ENCODE measurements at regions of chr1 and their contacts with region 1.

Region 1: GRCh38 chr1:63316984-63317816 is 5.2 kb upstream of the FOXD3 start:
- DNase-seq: peak; percentile 96
- ATAC-seq: peak; percentile 74
- H3K4me3 Mint-ChIP-seq: peak overlapping the region; percentile 94
- H3K27ac Mint-ChIP-seq: peak overlapping the region; percentile 84
- H3K4me1 Mint-ChIP-seq: peaks cover 48% of the 10 kb centered on the region
- H3K27me3 Mint-ChIP-seq: peaks cover 27% of the 10 kb centered on the region
- CTCF ChIP-seq: peak; percentile 56

Region 2: GRCh38 chr1:63294803-63295594 is 22.2 kb before region 1 on chr1:
- CTCF ChIA-PET with region 1: interaction called, 16 read pairs
- POLR2A ChIA-PET with region 1: no interaction called
- DNase-seq: no peak
- ATAC-seq: peak; percentile 87
- H3K4me3 Mint-ChIP-seq: peak overlapping the region; percentile 34
- H3K27ac Mint-ChIP-seq: peak overlapping the region; percentile 95
- H3K4me1 Mint-ChIP-seq: peaks cover 37% of the 10 kb centered on the region
- H3K27me3 Mint-ChIP-seq: no peaks in the 10 kb centered on the region
- CTCF ChIP-seq: no peak

Region 3: DNA sequence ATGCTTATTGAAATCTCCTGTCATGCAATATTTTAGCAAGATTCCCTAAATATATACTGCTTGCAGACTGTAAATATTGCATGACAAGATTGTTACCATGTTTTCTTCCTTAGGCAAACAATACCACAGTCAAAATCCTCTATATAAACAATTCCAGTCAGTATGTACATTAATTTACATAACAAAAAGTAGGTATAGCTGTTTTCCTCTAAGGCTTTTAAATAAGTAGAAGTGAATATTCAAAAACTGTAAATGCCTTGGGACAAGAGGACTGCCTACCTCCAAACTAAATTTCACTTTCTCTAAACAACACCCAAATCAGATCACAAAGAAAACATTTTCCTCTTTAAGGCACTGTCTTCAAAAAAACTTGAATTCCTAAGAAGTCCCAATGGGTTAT is 12.2 kb before region 1 on chr1:
- CTCF ChIA-PET with region 1: interaction called, 16 read pairs
- POLR2A ChIA-PET with region 1: no interaction called
- DNase-seq: no peak
- ATAC-seq: peak; percentile 18
- H3K4me3 Mint-ChIP-seq: peak overlapping the region; percentile 49
- H3K27ac Mint-ChIP-seq: peak overlapping the region; percentile 97
- H3K4me1 Mint-ChIP-seq: peaks cover 43% of the 10 kb centered on the region
- H3K27me3 Mint-ChIP-seq: peaks cover 11% of the 10 kb centered on the region; the same call in 1 of the 2 replicates
- CTCF ChIP-seq: no peak